ENCODE measurements at regions of chr2 and their contacts with region 1.

Region 1: DNA sequence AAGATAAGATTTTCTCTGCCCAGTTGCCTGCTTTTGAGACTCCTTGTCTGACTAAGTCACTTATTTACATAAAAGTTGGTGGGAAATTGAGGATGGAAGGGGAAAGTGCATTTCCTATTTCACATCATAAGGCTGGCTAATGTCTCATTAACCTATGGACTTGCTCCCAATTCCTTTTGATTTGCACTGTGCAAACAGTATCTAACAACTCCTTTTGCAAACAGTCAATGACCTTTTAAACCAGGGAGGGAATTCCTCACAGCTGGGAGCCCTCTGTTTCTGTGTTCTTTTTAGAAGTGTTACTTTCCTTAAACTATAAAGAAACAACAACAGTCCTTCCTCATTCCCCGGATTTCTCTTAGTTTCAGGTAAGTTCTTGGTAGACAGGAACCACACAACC is 272.8 kb downstream of the RND3 start:
- DNase-seq: peak; percentile 33
- H3K4me3 Mint-ChIP-seq: no peak overlapping the region
- H3K27ac Mint-ChIP-seq: peak overlapping the region; percentile 14
- H3K4me1 Mint-ChIP-seq: peaks cover 19% of the 10 kb centered on the region
- H3K27me3 Mint-ChIP-seq: no peaks in the 10 kb centered on the region
- CTCF ChIP-seq: no peak

Region 2: GRCh38 chr2:150478200-150478974 is 263.8 kb after region 1 on chr2:
- CTCF ChIA-PET with region 1: no interaction called
- intact Hi-C with region 1: loop called (anchors 2 kb)
- DNase-seq: no peak
- H3K4me3 Mint-ChIP-seq: peak overlapping the region; percentile 94
- H3K27ac Mint-ChIP-seq: peak overlapping the region; percentile 94
- H3K4me1 Mint-ChIP-seq: peaks cover 72% of the 10 kb centered on the region
- H3K27me3 Mint-ChIP-seq: no peaks in the 10 kb centered on the region
- CTCF ChIP-seq: no peak

Measured in Calu3 (cell line).